ENCODE measurements at regions of chr15 and their contacts with region 1.

Region 1: DNA sequence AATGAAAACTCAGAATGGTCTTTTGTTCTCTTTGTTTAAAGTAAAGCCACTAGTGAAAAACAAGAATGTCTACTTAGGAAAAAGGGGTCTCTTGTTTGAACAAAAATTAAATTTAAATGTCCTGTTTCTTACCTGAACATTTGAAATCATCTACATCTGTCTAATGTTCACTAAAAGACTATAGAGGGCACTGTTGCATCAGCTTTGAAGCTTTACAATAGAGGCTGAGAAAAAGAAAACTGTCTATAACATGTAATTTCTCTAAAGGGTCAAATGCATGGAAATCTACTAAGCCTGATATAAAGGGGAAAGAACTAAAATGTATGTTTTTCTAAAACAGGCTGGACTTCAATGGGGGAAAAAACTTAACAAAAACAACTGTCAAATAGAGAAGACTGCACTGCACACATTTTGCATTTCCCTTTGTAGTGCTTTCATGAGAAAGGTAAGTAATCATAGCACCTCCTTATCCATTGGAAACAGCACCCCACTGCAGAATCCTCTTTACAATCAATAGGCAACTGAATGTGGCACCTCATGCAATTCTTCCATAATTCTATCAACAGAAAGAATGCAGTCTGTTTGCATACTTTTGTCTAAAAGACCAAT is 26.3 kb downstream of the DPH6 start:
- DNase-seq: peak; percentile 45
- ATAC-seq: peak; percentile 61
- H3K4me3 ChIP-seq: no peak overlapping the region
- H3K27ac ChIP-seq: no peak overlapping the region
- H3K4me1 ChIP-seq: peaks cover 8% of the 10 kb centered on the region
- H3K27me3 ChIP-seq: no peaks in the 10 kb centered on the region
- CTCF ChIP-seq: peak; percentile 60
- EP300 ChIP-seq: no peak
- POLR2A ChIP-seq: no peak
- RAD21 ChIP-seq: peak; percentile 69; the same call in 1 of the 2 replicates

Region 2: DNA sequence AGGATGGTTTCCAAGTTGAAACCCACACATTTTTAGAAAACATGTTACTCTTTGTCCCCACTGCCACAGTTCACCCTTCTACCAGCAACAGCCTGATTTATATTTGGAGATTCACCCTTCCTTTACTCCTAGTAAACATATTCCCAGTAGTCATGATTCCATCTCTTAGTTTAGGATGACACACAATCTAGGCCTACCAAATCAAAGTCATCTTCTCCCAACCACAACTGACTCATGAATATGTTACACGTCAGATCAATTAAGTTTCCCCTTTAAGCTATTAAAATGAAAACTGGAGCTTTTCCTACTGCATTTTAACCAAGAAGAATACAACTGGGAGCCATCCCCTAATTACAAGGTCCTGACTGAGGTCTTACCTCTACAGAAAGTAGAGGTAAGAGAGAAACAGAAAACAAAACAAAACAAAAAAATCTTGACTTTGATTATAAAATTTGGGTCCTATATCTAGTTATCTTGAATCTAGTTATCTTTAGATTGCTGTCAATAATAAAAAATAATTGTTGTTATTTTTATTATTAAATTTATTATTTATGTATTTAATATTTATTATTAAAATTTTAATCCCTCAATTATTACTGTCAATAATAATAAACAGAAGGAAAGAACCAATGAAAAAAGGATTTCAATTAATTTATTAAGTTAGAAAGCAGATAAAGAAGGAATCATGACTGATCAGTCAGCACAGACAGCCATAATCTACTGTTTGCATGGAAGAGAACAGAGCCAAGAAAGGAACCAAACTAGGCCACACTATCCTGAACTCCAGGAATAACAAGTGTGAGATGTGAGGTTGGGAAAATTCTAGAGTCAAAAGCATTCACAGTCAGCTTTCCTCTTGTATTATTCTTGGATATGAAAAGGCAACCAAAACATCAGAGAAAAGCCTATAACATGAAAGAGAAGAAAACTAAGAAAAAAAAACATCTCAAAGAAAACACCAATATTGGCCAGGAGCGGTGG is 13.8 kb after region 1 on chr15:
- CTCF ChIA-PET with region 1: no interaction called
- POLR2A ChIA-PET with region 1: no interaction called
- in situ Hi-C with region 1: no loop called
- intact Hi-C with region 1: no loop called
- DNase-seq: no peak
- ATAC-seq: no peak
- H3K4me3 ChIP-seq: no peak overlapping the region
- H3K27ac ChIP-seq: no peak overlapping the region
- H3K4me1 ChIP-seq: peaks cover 12% of the 10 kb centered on the region
- H3K27me3 ChIP-seq: no peaks in the 10 kb centered on the region; a peak in 1 of 5 replicates
- CTCF ChIP-seq: no peak
- EP300 ChIP-seq: no peak
- POLR2A ChIP-seq: no peak
- RAD21 ChIP-seq: no peak

Region 3: GRCh38 chr15:35751413-35752133 is 231.9 kb after region 1 on chr15:
- CTCF ChIA-PET with region 1: no interaction called
- POLR2A ChIA-PET with region 1: no interaction called
- in situ Hi-C with region 1: no loop called
- intact Hi-C with region 1: loop called (anchors 5 kb)
- DNase-seq: peak; percentile 52
- ATAC-seq: peak; percentile 82
- H3K4me3 ChIP-seq: no peak overlapping the region
- H3K27ac ChIP-seq: no peak overlapping the region
- H3K4me1 ChIP-seq: no peaks in the 10 kb centered on the region
- H3K27me3 ChIP-seq: no peaks in the 10 kb centered on the region
- CTCF ChIP-seq: peak; percentile 77
- EP300 ChIP-seq: no peak
- POLR2A ChIP-seq: no peak
- RAD21 ChIP-seq: no peak

Measured in HepG2 (cell line).